IMR-90 (cell line): ENCODE measurements at regions of chr12 and their contacts with region 1.

Region 1: GRCh38 chr12:18108611-18109010 is 18.6 kb upstream of the RERGL start:
- DNase-seq: no peak
- ATAC-seq: no peak
- H3K4me3 ChIP-seq: no peak overlapping the region
- H3K27ac ChIP-seq: no peak overlapping the region
- H3K4me1 ChIP-seq: no peaks in the 10 kb centered on the region
- H3K27me3 ChIP-seq: no peaks in the 10 kb centered on the region
- CTCF ChIP-seq: no peak
- POLR2A ChIP-seq: no peak
- RAD21 ChIP-seq: no peak

Region 2: GRCh38 chr12:18084080-18084479 is 24.5 kb before region 1 on chr12:
- CTCF ChIA-PET with region 1: no interaction called
- POLR2A ChIA-PET with region 1: interaction called, 19 read pairs
- dilution Hi-C with region 1: no loop called
- in situ Hi-C with region 1: no loop called
- intact Hi-C with region 1: no loop called
- DNase-seq: no peak
- ATAC-seq: no peak
- H3K4me3 ChIP-seq: no peak overlapping the region
- H3K27ac ChIP-seq: no peak overlapping the region
- H3K4me1 ChIP-seq: no peaks in the 10 kb centered on the region
- H3K27me3 ChIP-seq: no peaks in the 10 kb centered on the region
- CTCF ChIP-seq: no peak
- POLR2A ChIP-seq: no peak
- RAD21 ChIP-seq: no peak

Region 3: DNA sequence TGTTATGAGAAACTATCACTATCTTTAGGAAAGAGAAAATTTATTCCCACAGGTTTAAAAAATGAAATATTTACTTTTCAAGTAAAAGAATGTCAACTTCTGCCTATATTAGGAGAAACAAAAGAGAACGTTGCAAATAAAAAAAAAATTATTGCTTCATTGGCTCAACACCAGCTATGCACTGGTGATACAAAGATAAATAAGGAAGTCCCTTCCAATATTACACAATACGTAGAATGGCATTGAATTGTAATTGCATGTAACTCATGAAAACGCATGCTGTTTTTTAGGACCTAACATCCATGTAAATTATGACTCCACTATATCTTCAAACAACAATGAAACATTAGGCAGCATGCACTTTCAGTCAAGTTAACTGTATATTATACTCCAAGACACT is 37.8 kb after region 1 on chr12:
- CTCF ChIA-PET with region 1: no interaction called
- POLR2A ChIA-PET with region 1: no interaction called
- dilution Hi-C with region 1: no loop called
- in situ Hi-C with region 1: no loop called
- intact Hi-C with region 1: no loop called
- DNase-seq: no peak
- ATAC-seq: no peak
- H3K4me3 ChIP-seq: no peak overlapping the region
- H3K27ac ChIP-seq: no peak overlapping the region
- H3K4me1 ChIP-seq: no peaks in the 10 kb centered on the region
- H3K27me3 ChIP-seq: no peaks in the 10 kb centered on the region
- CTCF ChIP-seq: no peak
- POLR2A ChIP-seq: no peak
- RAD21 ChIP-seq: no peak